ENCODE measurements at regions of chr6 and their contacts with region 1.

Region 1: DNA sequence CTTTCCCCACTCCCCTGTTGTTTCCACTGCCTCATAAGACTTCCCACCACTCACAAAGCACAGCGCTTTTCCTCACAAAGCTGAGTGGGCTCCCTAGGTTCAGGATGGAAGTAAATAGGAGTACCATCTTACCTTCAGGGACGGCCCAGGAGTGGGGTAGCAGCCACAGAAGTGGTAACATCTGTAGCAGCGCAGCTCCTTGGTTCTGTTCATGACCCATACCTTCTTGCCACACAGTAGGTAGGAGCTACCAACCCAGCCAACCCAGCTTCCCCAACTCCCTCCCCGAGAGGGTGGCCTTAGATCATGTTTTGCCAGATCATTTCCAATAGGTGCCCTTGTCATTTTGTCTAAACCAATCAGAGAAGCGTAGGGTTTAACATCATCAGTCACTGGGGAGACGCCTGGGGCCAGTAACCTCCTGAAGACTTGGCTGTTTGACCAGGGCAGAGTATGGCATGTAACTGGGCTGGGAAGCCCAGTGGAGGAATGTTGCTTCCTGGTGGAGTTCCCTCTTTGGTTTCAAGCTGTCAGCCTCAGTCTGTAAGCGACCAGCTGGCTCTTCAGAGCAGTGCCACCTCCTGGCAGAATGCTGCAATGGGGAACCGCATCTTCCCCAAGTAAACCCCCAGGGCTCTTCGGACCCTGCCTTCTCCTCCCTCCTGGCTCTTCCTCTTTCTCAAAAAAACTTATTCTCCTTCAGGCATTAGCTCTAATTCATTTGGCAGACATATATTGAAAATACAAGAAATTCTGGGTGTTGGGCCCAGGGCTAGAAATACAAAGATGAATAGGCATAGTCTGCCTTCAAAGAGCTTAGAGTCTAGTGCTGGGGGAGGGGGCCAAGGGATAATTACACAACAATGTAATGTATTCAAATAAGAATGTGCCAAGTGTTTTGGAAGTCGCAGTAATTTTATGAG is at the start of gene HLA-DMA:
- DNase-seq: peak; percentile 93
- H3K4me3 ChIP-seq: no peak within 1 kb of the TSS
- CTCF ChIP-seq: peak; percentile 84

Region 2: DNA sequence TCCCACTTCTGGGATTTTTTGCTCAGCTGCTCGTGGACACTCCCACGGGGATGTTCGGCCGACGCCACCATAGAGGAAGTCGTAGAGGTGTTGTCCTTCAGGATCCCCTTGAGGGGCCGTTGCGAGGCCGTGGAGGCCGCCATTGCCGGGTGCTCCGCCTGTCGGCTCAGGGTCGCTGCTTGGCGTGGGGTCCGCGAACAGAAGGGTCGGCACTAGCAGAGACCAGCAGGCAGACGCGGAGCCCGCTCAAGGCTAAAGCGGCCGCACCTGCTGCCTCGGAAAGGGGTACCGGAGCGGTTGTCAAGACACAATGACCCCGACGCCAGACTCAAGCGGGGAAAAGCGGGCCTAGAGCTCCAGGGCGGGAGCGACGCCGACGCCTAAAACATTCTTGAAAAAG is 73.4 kb before region 1 on chr6:
- CTCF ChIA-PET with region 1: interaction called, 95 read pairs
- POLR2A ChIA-PET with region 1: no interaction called
- DNase-seq: no peak
- H3K4me3 ChIP-seq: no peak overlapping the region
- CTCF ChIP-seq: no peak

Region 3: DNA sequence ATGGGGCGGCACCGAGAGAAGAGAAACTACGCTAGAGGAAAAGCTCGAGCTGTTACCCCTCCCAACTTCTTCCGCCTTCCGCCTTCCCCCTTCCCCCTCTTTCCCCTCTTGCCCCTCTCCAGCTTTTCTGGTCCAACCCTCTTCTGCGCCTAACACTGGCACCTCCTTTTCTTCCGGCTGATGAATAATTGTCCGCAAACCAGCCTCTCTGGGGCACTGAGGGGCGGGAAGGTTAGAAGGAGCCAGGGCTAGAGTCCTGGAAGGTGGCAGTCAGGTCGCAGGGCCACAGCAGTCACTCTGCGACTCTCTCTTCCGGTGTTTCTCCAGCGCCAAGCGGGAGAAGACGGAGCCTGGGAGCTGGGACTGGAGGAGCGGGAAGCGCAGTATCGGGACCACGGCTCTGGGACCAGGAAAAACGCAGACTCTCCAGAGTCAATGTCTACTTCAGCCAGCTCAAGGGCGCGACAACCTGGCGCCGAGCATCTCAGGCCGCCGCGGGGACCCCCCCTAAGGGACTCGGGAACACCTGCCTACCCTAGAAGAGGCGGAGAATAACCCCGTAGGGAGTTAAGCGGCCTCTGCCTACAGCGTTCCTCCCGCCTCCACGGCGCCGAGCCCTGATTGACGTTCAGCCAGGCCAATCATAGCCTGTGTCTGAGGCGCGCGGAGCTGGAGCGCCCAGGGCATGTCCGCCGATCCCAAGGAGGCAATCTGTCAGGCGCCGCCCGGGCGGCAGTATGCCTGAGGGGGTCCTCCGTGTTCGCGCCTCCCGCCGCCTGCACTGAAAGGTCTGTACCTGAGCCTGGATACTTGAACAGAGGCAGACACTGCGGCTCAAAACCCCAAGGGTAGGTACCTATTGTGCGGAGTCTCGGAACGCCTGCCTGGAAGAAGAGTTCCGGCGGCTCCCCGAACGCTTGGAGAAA is 58.7 kb before region 1 on chr6:
- CTCF ChIA-PET with region 1: interaction called, 21 read pairs
- POLR2A ChIA-PET with region 1: no interaction called
- DNase-seq: peak; percentile 44
- H3K4me3 ChIP-seq: peak overlapping the region; percentile 77
- CTCF ChIP-seq: no peak

Region 4: DNA sequence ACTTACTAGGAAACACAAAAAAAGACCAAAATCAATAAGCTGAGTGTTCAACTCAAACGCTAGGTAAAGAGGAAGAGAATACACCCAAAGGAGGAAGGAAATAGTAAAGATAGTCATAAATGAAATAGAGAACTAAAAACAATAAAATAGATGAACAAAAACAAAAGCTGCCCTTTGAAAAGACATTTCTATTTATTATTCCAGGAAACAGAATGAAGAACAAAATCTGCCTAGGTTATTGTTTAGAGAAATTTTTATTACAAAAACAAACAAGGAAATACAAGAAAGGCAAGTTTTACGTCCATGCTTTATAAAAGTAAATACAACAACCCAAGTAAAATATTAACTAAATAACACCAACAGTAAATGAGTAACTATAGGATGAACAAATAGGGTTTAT is 32.4 kb before region 1 on chr6:
- CTCF ChIA-PET with region 1: interaction called, 14 read pairs
- POLR2A ChIA-PET with region 1: no interaction called
- DNase-seq: no peak
- H3K4me3 ChIP-seq: no peak overlapping the region
- CTCF ChIP-seq: no peak

Region 5: DNA sequence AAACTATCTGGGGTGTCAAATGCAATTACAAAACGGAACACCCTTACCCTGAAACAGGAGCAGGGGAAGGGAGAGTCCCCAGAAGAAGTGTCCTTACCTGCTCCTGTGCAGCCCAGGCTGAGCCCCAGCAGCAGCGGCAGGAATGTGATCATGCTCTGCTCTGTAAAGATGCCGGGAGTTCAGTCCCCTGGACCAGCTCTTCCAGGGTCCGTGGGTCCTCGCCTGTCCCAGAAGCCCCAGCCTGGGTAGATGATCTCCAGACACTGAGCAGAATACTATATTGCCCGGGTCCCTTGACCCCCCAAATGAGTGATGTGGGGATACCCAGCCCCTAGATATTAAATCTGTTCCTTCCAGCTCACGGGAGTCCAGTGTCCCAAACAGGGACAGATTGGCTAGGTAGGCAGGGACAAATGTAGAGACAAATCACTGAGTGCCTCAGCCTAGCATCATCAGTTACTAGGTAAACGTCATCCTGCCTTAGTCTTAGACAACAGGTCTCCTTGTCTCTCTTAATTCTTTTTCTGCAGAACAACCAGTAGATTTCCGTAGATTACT is 12.3 kb before region 1 on chr6 and contains the start of gene HLA-DMB:
- CTCF ChIA-PET with region 1: interaction called, 124 read pairs
- POLR2A ChIA-PET with region 1: no interaction called
- DNase-seq: peak; percentile 33
- H3K4me3 ChIP-seq: no peak within 1 kb of the TSS
- CTCF ChIP-seq: no peak

Region 6: GRCh38 chr6:32971581-32972352 is 18.7 kb after region 1 on chr6:
- CTCF ChIA-PET with region 1: interaction called, 182 read pairs
- POLR2A ChIA-PET with region 1: interaction called, 58 read pairs
- DNase-seq: peak; percentile 99
- H3K4me3 ChIP-seq: peak overlapping the region; percentile 92
- CTCF ChIP-seq: no peak

Region 7: GRCh38 chr6:33183071-33183683 is 230.1 kb after region 1 on chr6:
- CTCF ChIA-PET with region 1: no interaction called
- POLR2A ChIA-PET with region 1: no interaction called
- DNase-seq: no peak
- H3K4me3 ChIP-seq: no peak overlapping the region
- CTCF ChIP-seq: no peak